Psoas muscle (tissue), 8 donors: ENCODE measurements at regions of chr12 and their contacts with region 1.

Region 1: GRCh38 chr12:88638966-88639760 is 58.9 kb upstream of the KITLG start:
- DNase-seq: no peak
- ATAC-seq: peak; percentile 63 to 78 (median 70)
- H3K4me3 ChIP-seq: peak overlapping the region; percentile 37
- H3K27ac ChIP-seq: peak overlapping the region; percentile 62
- H3K4me1 ChIP-seq: peaks cover 8% of the 10 kb centered on the region
- H3K27me3 ChIP-seq: no peaks in the 10 kb centered on the region
- CTCF ChIP-seq: no peak

Region 2: DNA sequence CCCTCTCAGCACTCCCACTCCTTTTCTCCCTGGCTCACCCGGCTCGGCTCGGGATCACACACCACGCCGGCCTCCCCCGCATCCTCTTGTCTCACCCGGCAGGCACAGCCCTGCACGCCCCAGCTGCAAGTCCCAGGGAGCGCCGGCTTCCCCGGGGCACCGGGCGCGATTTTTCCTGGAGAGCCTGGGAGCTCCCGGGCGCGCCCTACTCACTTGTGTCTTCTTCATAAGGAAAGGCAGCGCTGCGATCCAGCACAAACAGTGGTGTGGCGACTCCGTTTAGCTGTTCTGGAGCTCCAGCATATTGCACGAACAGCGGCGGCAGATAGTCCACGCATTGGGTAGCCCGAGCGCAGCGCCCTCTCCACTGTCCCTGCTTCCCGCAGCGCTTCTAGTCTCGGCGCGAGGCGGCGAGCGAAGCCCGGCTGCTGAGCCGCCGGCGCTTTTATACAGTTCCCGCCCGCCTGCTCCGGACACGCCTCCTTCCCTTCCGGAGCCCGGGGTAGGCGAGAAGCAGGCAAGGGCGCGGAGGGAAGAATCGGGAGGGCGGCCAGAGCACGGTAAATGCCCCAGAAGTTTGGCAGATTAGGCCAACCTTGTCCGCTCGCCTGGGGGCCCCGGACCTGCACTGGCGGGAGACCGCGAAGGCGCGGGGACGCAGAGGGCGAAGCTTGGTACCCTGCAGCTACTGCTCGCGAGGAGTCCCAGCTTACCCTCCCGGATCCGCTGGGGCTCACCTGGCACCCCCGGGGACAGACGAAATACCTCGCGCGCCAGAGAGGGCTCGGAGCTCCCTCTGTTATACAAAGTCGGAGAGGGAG is 58.9 kb before region 1 on chr12 and contains the start of gene KITLG:
- intact Hi-C with region 1: loop called in 1 of 2 experiments (anchors 5 kb)
- DNase-seq: peak; percentile 82 to 88
- ATAC-seq: peak; percentile 91 to 95 (median 94)
- H3K4me3 ChIP-seq: peak within 1 kb of the TSS; percentile 87
- H3K27ac ChIP-seq: peak within 1 kb of the TSS; percentile 72
- H3K4me1 ChIP-seq: peaks cover 4% of the 10 kb centered on the region
- H3K27me3 ChIP-seq: no peaks in the 10 kb centered on the region
- CTCF ChIP-seq: peak; percentile 26
- total RNA-seq, gene KITLG: 4.1 to 11.5 (median 8.1) TPM